HAP-1 (cell line): ENCODE measurements at regions of chr12 and their contacts with region 1.

Region 1: GRCh38 chr12:8226355-8226754 is 1.1 kb downstream of the FAM90A1 start:
- DNase-seq: no peak
- H3K4me3 ChIP-seq: no peak overlapping the region
- H3K4me1 ChIP-seq: no peaks in the 10 kb centered on the region; the same call in 1 of the 2 replicates
- H3K27me3 ChIP-seq: no peaks in the 10 kb centered on the region

Region 2: GRCh38 chr12:8026291-8026900 is 200.0 kb before region 1 on chr12:
- in situ Hi-C with region 1: no loop called
- DNase-seq: peak; percentile 96 to 97
- H3K4me3 ChIP-seq: peak overlapping the region; percentile 41
- H3K4me1 ChIP-seq: peaks cover 2% of the 10 kb centered on the region
- H3K27me3 ChIP-seq: no peaks in the 10 kb centered on the region

Region 3: GRCh38 chr12:8108808-8109398 is 117.5 kb before region 1 on chr12:
- in situ Hi-C with region 1: loop called (anchors 10 kb)
- DNase-seq: peak; percentile 59 to 85
- H3K4me3 ChIP-seq: no peak overlapping the region
- H3K4me1 ChIP-seq: no peaks in the 10 kb centered on the region; the same call in 1 of the 2 replicates
- H3K27me3 ChIP-seq: no peaks in the 10 kb centered on the region